PC-9 (cell line): ENCODE measurements at regions of chr6 and their contacts with region 1.

Region 1: DNA sequence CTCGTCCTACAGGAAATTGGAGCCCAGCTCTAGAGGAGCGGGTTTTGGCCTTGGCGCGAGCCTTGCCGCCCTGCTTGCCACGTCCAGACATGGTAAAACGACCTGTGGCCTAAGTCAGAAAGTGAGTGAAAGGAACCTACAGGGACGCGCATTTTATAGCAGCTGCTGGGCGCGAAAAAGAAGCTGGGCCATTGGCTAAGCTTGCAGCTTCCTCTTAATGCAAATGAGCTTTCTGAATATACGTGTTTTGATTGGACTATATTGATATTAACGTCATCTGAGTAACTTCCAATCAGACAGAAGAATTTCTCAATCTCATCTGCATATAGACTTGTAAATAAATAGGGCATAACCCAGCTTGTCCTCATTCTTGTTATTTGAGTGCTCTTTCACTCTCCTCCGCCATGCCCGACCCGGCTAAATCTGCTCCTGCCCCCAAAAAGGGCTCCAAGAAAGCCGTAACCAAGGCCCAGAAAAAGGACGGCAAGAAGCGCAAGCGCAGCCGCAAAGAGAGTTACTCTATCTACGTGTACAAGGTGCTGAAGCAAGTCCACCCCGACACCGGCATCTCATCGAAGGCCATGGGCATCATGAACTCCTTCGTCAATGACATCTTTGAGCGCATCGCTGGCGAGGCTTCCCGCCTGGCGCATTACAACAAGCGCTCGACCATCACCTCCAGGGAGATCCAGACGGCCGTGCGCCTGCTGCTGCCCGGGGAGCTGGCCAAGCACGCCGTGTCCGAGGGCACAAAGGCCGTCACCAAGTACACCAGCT is 18.9 kb downstream of the OR2B2 start:
- DNase-seq: peak; percentile 94 to 99
- H3K4me3 ChIP-seq: peak overlapping the region; percentile 80
- H3K27ac ChIP-seq: peak overlapping the region; percentile 73
- H3K4me1 ChIP-seq: peaks cover 15% of the 10 kb centered on the region
- H3K27me3 ChIP-seq: no peaks in the 10 kb centered on the region
- CTCF ChIP-seq: no peak

Region 2: DNA sequence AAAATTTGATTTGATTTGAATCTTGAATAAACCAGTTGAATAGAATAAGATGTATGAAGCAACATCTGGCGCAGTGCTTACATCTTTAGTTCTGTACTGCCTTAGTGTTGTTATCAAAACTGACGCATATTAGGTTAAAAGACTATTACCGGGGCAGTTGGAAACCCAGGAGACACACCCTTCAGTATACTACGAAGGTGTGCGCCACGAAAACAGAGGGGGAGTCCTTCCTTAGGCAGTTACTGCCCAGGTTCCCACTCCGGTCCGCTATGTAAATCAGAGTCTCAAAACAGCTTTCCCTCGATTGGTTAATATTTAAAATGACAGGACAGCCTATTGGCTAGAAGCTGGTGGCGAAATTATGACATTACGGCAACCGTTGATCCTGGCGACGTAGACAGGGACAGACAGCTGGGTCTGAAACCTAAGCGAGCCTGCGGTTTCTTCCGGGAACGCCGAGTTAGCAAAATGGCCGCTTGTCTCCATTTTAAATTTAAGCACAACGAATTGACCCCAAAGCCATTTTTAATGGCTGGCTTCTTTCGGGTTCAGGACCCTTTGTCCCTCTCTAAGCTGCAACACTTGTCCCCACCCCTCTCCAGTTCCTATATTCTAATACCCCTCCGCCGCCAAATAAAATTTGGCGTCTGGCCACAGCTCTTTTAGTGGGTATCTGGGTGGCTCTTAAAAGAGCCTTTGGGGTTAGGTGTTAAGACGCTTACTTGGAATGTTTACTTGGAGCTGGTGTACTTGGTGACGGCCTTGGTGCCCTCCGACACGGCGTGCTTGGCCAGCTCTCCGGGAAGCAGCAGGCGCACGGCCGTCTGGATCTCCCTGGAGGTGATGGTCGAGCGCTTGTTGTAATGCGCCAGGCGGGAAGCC is 1770.2 kb before region 1 on chr6:
- CTCF ChIA-PET with region 1: interaction called, 4 read pairs
- POLR2A ChIA-PET with region 1: interaction called, 13 read pairs
- intact Hi-C with region 1: no loop called
- DNase-seq: peak; percentile 91 to 98
- H3K4me3 ChIP-seq: peak overlapping the region; percentile 86
- H3K27ac ChIP-seq: peak overlapping the region; percentile 78
- H3K4me1 ChIP-seq: peaks cover 22% of the 10 kb centered on the region
- H3K27me3 ChIP-seq: no peaks in the 10 kb centered on the region
- CTCF ChIP-seq: no peak

Region 3: GRCh38 chr6:27132532-27133280 is 760.5 kb before region 1 on chr6:
- CTCF ChIA-PET with region 1: no interaction called
- POLR2A ChIA-PET with region 1: interaction called, 24 read pairs
- intact Hi-C with region 1: loop called (anchors 1 kb)
- DNase-seq: peak; percentile 95 to 98
- H3K4me3 ChIP-seq: peak overlapping the region; percentile 74
- H3K27ac ChIP-seq: peak overlapping the region; percentile 80
- H3K4me1 ChIP-seq: peaks cover 16% of the 10 kb centered on the region
- H3K27me3 ChIP-seq: no peaks in the 10 kb centered on the region
- CTCF ChIP-seq: no peak

Region 4: DNA sequence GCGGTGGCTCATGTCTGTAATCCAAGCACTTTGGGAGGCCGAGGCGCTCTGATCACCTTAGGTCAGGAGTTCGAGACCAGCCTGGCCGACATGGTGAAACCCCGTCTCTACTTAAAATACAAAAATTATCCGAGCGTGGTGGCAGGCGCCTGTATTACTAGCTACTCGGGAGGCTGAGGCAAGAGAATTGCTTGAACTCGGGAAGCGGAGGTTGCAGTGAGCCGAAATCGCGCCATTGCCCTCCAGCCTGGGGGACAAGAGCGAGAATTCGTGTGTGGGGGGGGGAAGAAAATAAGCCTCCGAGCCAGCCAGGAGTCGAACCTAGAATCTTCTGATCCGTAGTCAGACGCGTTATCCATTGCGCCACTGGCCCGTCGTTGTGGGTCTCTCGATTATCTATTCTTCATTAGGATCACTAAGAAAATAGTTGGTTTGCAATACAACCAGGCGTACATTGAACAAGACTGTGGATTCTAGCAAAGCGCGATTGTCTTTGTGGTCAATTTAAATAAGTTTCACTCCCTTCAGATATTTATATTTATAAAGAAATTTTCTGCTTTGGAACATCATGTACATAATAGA is 679.6 kb before region 1 on chr6:
- CTCF ChIA-PET with region 1: no interaction called
- POLR2A ChIA-PET with region 1: no interaction called
- intact Hi-C with region 1: loop called (anchors 1 kb)
- DNase-seq: peak; percentile 61
- H3K4me3 ChIP-seq: peak overlapping the region; percentile 73
- H3K27ac ChIP-seq: no peak overlapping the region
- H3K4me1 ChIP-seq: 0 out of 2 replicates have a peak, but pooled peaks cover 4% of the 10 kb centered on the region
- H3K27me3 ChIP-seq: no peaks in the 10 kb centered on the region
- CTCF ChIP-seq: no peak

Region 5: GRCh38 chr6:27553123-27553904 is 339.9 kb before region 1 on chr6:
- CTCF ChIA-PET with region 1: interaction called, 12 read pairs
- POLR2A ChIA-PET with region 1: interaction called, 4 read pairs
- intact Hi-C with region 1: no loop called
- DNase-seq: peak in 1 of 2 experiments; percentile 57
- H3K4me3 ChIP-seq: peak overlapping the region; percentile 39; the same call in 1 of the 2 replicates
- H3K27ac ChIP-seq: peak overlapping the region; percentile 3; the same call in 1 of the 2 replicates
- H3K4me1 ChIP-seq: peaks cover 28% of the 10 kb centered on the region
- H3K27me3 ChIP-seq: no peaks in the 10 kb centered on the region
- CTCF ChIP-seq: no peak

Region 6: GRCh38 chr6:27825025-27825793 is 68.0 kb before region 1 on chr6:
- CTCF ChIA-PET with region 1: interaction called, 4 read pairs
- POLR2A ChIA-PET with region 1: interaction called, 19 read pairs
- intact Hi-C with region 1: no loop called
- DNase-seq: no peak
- H3K4me3 ChIP-seq: peak overlapping the region; percentile 50
- H3K27ac ChIP-seq: peak overlapping the region; percentile 51
- H3K4me1 ChIP-seq: no peaks in the 10 kb centered on the region
- H3K27me3 ChIP-seq: no peaks in the 10 kb centered on the region
- CTCF ChIP-seq: no peak

Region 7: DNA sequence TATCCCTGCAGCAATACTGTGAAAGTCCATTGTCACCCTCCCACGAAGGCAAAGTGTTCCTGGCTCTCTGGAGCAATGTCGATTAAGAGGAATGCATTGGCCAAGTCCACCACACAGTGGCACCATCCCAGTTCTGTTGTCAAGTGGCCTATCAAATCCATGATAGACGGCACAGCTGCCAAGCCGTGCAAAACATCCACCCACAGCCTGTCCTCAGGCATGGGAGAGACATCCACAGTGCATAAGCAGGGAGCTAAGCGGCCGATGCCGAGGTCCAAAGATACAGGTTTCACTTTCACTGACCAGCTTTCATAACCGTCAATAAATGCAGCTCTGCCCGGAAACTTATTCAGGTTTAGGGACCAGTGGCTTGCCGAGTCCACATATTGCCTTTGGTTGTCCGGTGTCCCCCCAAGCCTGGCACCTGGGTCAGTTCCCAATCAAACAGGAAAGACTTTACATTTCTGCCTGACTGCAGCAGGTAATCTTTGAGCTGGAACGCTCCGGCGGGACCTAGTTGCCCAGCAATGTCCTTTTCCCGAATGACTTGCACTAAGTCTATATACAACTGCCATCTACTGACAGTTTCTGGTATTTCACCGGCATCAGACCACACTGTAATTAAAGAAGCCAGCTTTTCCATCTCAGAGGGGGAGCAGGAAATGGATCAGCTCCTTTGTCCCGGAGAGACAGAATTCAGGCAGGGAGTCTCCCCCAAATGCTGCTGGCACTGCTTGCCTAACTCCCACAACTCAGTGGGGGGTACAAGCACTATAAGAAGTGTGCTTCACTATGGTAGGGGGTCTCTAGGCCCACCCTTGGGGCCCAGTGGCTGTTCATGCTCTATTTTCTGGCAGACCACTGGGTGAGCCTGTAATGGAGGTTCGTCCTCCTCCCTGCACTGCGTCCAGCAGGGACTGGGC is 462.8 kb after region 1 on chr6:
- CTCF ChIA-PET with region 1: interaction called, 7 read pairs
- POLR2A ChIA-PET with region 1: interaction called, 5 read pairs
- intact Hi-C with region 1: loop called (anchors 1 kb)
- DNase-seq: peak; percentile 75 to 80
- H3K4me3 ChIP-seq: peak overlapping the region; percentile 70
- H3K27ac ChIP-seq: peak overlapping the region; percentile 55
- H3K4me1 ChIP-seq: peaks cover 28% of the 10 kb centered on the region
- H3K27me3 ChIP-seq: no peaks in the 10 kb centered on the region
- CTCF ChIP-seq: peak; percentile 86